Activated B cell treated with CpG ODN at 0.5 μM for 24 hours (primary cell): ENCODE measurements at regions of chr6 and their contacts with region 1.

Region 1: DNA sequence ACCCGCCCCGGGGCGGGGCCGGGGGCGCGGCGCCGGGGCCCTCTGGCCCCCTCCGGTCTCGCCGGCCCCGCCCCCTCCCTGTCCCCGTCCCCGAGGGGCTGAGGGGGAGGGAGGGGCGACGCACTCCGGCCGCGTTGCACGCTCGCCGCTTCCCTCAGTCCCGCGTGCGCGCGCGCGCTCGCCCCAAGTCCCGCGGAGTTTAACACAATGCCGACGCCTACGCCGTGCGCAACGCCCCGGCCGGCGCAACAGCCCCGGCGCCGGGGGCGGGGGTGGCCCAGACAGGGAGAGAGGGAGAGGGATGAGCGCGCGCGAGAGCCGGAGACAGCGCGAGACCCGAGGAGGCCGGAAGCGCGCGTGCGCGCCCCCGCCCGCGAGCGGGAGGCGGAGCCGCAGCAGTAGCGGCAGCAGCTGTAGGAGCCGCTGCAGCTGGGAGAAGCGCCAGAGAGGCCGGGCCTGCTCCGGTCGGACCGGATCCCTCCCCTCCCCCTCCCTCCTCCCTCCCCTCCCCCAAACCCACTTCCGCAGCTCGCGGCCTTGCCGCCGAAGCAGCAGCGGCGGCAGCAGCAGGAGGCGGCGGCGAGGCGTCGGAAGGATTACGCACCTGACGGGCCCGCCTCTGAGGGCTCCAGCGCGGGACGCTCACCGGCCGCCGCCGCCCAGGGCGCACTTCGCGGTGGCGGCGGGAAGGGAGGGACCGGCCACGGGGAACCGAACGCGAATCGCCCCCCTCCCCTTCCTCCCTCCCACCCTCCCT is 905 bp downstream of the ZBTB2 start:
- DNase-seq: peak; percentile 98
- ATAC-seq: peak; percentile 74
- H3K4me3 Mint-ChIP-seq: peak overlapping the region; percentile 91
- H3K27ac Mint-ChIP-seq: peak overlapping the region; percentile 75
- H3K4me1 Mint-ChIP-seq: peaks cover 53% of the 10 kb centered on the region
- H3K27me3 Mint-ChIP-seq: no peaks in the 10 kb centered on the region
- CTCF ChIP-seq: no peak

Region 2: GRCh38 chr6:150004783-150005717 is 1385.4 kb before region 1 on chr6:
- CTCF ChIA-PET with region 1: no interaction called
- POLR2A ChIA-PET with region 1: no interaction called
- intact Hi-C with region 1: loop called (anchors 1 kb)
- DNase-seq: peak; percentile 82
- ATAC-seq: peak; percentile 79
- H3K4me3 Mint-ChIP-seq: peak overlapping the region; percentile 92
- H3K27ac Mint-ChIP-seq: peak overlapping the region; percentile 95
- H3K4me1 Mint-ChIP-seq: peaks cover 34% of the 10 kb centered on the region
- H3K27me3 Mint-ChIP-seq: peaks cover 12% of the 10 kb centered on the region
- CTCF ChIP-seq: no peak

Region 3: DNA sequence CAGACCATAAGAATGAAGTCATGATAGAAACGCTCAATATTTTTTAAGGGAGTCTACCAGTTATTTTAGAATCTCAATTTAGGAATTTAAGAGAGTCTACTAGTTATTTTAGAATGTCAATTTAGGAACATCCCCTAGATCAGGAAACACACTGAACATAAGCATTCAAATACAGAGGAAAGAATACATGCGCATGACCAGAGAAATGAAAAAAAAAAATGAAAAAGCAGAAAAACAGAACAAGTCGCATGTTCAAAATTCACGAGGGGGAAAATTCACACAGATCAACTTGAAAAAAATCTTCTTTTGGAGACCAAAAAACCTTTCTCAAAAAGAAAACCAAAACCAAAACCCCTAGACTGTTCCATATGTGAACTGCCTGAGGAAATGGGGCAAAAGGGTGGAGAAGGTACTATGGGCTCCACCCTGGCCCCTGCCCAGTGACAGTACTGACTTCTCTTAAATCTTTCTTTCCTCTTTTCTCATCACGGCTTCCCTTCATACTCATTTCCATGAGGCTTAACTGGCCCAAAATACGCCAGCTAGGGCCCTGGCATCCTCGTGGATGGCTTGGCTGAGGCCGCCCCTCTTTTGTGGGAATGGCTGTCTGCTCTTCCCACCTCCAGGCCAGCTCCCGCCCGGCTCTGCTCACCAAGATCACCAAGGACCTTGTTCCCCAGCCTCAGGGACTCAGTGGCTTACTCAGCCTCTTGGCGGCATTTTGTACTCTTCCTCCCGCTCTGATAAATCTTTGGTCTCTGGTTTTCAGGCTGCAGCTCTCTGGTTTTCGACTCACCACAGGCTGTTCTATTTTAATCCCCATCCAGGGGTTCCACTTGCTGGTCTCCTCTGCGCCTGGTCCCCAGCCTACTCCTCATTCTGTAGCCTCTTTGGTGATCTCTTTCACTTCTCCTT is 10.3 kb before region 1 on chr6:
- CTCF ChIA-PET with region 1: interaction called, 4 read pairs
- POLR2A ChIA-PET with region 1: interaction called, 11 read pairs
- intact Hi-C with region 1: loop called (anchors 1 kb)
- DNase-seq: no peak
- ATAC-seq: peak; percentile 62
- H3K4me3 Mint-ChIP-seq: peak overlapping the region; percentile 70
- H3K27ac Mint-ChIP-seq: peak overlapping the region; percentile 85
- H3K4me1 Mint-ChIP-seq: peaks cover 63% of the 10 kb centered on the region
- H3K27me3 Mint-ChIP-seq: no peaks in the 10 kb centered on the region
- CTCF ChIP-seq: no peak

Region 4: GRCh38 chr6:152301764-152302568 is 911.5 kb after region 1 on chr6:
- CTCF ChIA-PET with region 1: no interaction called
- POLR2A ChIA-PET with region 1: no interaction called
- intact Hi-C with region 1: loop called (anchors 1 kb)
- DNase-seq: peak; percentile 82
- ATAC-seq: peak; percentile 97
- H3K4me3 Mint-ChIP-seq: peak overlapping the region; percentile 100
- H3K27ac Mint-ChIP-seq: peak overlapping the region; percentile 100
- H3K4me1 Mint-ChIP-seq: peaks cover 40% of the 10 kb centered on the region
- H3K27me3 Mint-ChIP-seq: no peaks in the 10 kb centered on the region
- CTCF ChIP-seq: no peak

Region 5: GRCh38 chr6:153002607-153003365 is 1612.3 kb after region 1 on chr6 and contains the start of gene MTRF1L:
- CTCF ChIA-PET with region 1: no interaction called
- POLR2A ChIA-PET with region 1: no interaction called
- intact Hi-C with region 1: loop called (anchors 10 kb)
- DNase-seq: peak; percentile 77
- ATAC-seq: peak; percentile 85
- H3K4me3 Mint-ChIP-seq: peak within 1 kb of the TSS; percentile 99
- H3K27ac Mint-ChIP-seq: peak within 1 kb of the TSS; percentile 93
- H3K4me1 Mint-ChIP-seq: peaks cover 42% of the 10 kb centered on the region
- H3K27me3 Mint-ChIP-seq: no peaks in the 10 kb centered on the region
- CTCF ChIP-seq: no peak
- total RNA-seq, gene MTRF1L: 20.7 and 21.3 TPM in 2 replicates